ENCODE measurements at regions of chr20 and their contacts with region 1.

Region 1: GRCh38 chr20:45311589-45312211 is 3.6 kb upstream of the MATN4 start:
- DNase-seq: no peak
- ATAC-seq: peak; percentile 90
- H3K4me3 ChIP-seq: peak overlapping the region in 1 of 2 experiments; percentile 26; a peak in 2 of 4 replicates
- H3K27ac ChIP-seq: no peak overlapping the region
- H3K4me1 ChIP-seq: peaks cover 4% of the 10 kb centered on the region; the same call in 1 of the 2 replicates
- H3K27me3 ChIP-seq: no peaks in the 10 kb centered on the region
- CTCF ChIP-seq: peak; percentile 97

Region 2: DNA sequence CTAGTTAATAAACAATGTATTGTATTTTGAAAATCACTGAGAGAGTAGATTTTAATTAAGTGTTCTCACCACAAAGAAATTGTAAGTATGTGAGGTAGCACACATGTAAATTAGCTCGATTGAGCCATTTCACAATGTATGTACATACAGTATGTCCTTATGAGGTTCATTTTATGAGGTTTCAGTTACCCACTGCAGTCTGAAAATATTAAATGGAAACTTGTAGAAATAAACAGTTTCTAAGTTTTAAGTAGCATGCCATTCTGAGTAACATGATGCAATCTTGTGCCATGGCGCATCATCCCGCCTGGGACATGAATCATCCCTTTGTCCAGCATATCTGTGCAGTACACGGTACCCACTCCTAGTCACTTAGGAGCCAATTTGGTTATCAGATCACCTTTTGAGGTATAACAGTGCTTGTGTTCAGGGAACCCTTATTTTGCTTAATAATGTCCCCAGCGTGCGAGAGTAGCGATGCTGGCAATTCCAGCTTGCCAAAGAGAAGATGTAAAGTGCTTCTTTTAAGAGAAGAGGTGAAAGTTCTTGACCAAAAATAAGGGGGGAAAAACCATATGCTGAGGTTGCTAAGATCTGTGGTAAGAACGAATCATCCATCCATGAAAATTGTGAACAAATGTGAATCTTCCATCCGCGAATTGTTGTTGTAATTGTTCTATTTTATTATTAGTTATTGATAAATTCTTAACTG is 275.5 kb before region 1 on chr20:
- CTCF ChIA-PET with region 1: no interaction called
- POLR2A ChIA-PET with region 1: no interaction called
- in situ Hi-C with region 1: no loop called
- intact Hi-C with region 1: no loop called
- DNase-seq: no peak
- ATAC-seq: no peak
- H3K4me3 ChIP-seq: no peak overlapping the region
- H3K27ac ChIP-seq: peak overlapping the region; percentile 55; the same call in 1 of the 2 replicates
- H3K4me1 ChIP-seq: peaks cover 2% of the 10 kb centered on the region
- H3K27me3 ChIP-seq: no peaks in the 10 kb centered on the region
- CTCF ChIP-seq: no peak

Region 3: GRCh38 chr20:45322952-45323383 is 11.3 kb after region 1 on chr20:
- CTCF ChIA-PET with region 1: interaction called, 10 read pairs
- POLR2A ChIA-PET with region 1: no interaction called
- in situ Hi-C with region 1: no loop called
- intact Hi-C with region 1: no loop called
- DNase-seq: no peak
- ATAC-seq: peak; percentile 61
- H3K4me3 ChIP-seq: no peak overlapping the region
- H3K27ac ChIP-seq: no peak overlapping the region
- H3K4me1 ChIP-seq: peaks cover 10% of the 10 kb centered on the region
- H3K27me3 ChIP-seq: no peaks in the 10 kb centered on the region
- CTCF ChIP-seq: peak; percentile 74

Region 4: GRCh38 chr20:45450097-45450818 is 138.6 kb after region 1 on chr20:
- CTCF ChIA-PET with region 1: interaction called, 11 read pairs
- POLR2A ChIA-PET with region 1: no interaction called
- in situ Hi-C with region 1: no loop called
- intact Hi-C with region 1: no loop called
- DNase-seq: peak; percentile 32
- ATAC-seq: peak; percentile 45; the same call in 1 of the 2 replicates
- H3K4me3 ChIP-seq: no peak overlapping the region
- H3K27ac ChIP-seq: no peak overlapping the region
- H3K4me1 ChIP-seq: no peaks in the 10 kb centered on the region
- H3K27me3 ChIP-seq: peaks cover 8% of the 10 kb centered on the region; the same call in 1 of the 2 replicates
- CTCF ChIP-seq: peak; percentile 77